ENCODE measurements at regions of chr5 and their contacts with region 1.

Region 1: GRCh38 chr5:33440482-33441240 is at the start of gene TARS1:
- DNase-seq: peak; percentile 95 to 100
- ATAC-seq: peak; percentile 97 to 100 (median 98)
- H3K4me3 ChIP-seq: peak within 1 kb of the TSS; percentile 55 to 88 (median 75)
- H3K27ac ChIP-seq: peak within 1 kb of the TSS; percentile 78 to 95 (median 93)
- H3K4me1 ChIP-seq: peaks cover 0 to 52% (median 50%) of the 10 kb centered on the region in 9 donors
- H3K27me3 ChIP-seq: no peaks in the 10 kb centered on the region
- CTCF ChIP-seq: no peak
- total RNA-seq, gene TARS1: 61.9 to 97.8 (median 74.5) TPM

Region 2: DNA sequence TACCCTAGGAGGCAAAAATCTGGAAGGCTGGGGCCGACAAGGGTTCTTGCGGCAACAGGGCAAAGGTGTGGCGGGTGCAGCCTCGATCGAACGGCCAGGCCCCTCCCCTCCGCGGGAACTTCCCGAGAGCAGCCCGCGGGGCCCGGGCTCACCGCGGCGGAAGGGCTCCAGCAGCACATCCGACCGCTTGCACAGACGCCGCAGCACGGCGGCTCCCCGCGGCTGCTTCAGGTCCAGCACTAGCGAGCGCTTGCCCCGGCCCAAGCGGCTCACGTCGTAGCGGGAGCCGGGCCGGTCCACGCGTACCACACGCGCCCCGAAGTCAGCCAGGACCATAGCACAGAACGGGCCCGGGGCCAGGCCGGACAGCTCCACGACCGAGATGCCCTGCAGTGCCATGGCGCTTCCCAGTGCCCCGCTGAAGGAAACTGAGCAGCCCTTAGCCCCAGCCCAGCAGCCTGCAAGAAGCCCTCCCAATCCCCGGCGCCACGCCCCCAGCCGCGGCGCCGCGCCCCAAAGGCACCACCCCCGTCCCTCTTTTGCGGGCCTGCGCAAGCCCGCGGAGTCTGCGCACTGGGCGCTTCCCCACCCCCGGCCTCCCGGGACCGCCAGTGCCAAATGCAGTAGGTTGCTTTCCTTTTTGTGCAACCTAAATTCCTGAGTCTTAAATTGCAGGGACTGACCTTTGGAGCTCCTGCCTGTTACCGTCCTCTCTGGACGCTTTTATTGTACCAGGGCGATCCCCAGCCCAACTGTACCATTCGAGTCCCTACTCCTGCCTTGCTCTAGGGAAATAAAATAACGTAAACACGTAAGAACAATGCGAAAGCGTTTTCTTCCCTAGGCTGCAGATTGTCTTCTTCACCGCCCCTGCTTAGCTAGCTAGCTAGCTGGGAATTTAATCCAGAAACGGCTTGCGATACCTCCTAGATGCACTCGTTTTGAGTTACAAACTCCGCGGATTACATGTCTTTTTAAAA is 567.2 kb after region 1 on chr5 and contains the start of gene AMACR:
- intact Hi-C with region 1: loop called in 1 of 10 experiments (anchors 5 kb)
- DNase-seq: peak; percentile 92 to 96
- ATAC-seq: peak; percentile 97 to 98 (median 98)
- H3K4me3 ChIP-seq: peak within 1 kb of the TSS; percentile 57 to 90 (median 78)
- H3K27ac ChIP-seq: peak within 1 kb of the TSS; percentile 85 to 97 (median 90)
- H3K4me1 ChIP-seq: peaks cover 2 to 34% (median 17%) of the 10 kb centered on the region in 9 donors
- H3K27me3 ChIP-seq: no peaks in the 10 kb centered on the region
- CTCF ChIP-seq: peak in 4 of 9 donors; percentile 8 to 42 (median 28)
- total RNA-seq, gene AMACR: 5.3 to 16.2 (median 9.2) TPM